Gastrocnemius medialis (tissue), 4 donors: ENCODE measurements at regions of chr5 and their contacts with region 1.

Region 1: GRCh38 chr5:172194985-172195774 is 1.2 kb downstream of the EFCAB9 start:
- DNase-seq: no peak
- ATAC-seq: no peak
- H3K4me3 ChIP-seq: no peak overlapping the region
- H3K27ac ChIP-seq: no peak overlapping the region
- H3K4me1 ChIP-seq: no peaks in the 10 kb centered on the region
- H3K27me3 ChIP-seq: no peaks in the 10 kb centered on the region
- CTCF ChIP-seq: no peak
- POLR2A ChIP-seq: no peak

Region 2: DNA sequence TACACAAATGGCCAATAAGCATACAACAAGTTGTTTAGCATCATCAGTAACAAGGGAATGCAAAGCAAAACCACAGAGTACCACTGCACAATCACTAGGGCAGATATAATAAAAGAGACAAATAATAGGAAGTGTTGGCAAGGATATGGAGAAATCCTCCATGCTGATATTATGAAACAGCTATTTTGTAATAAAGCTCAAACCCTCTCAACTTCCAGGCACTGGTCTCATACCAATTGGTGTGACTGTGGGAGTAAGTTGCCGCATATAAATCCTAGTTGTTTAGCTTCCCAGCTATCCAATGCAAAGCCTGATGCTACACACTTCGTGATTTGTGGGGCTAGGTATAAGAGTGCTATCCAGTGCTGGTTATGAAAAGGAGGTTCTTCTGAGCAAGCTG is 320.9 kb before region 1 on chr5:
- in situ Hi-C with region 1: no loop called
- intact Hi-C with region 1: no loop called
- DNase-seq: no peak
- ATAC-seq: no peak
- H3K4me3 ChIP-seq: no peak overlapping the region
- H3K27ac ChIP-seq: no peak overlapping the region
- H3K4me1 ChIP-seq: no peaks in the 10 kb centered on the region
- H3K27me3 ChIP-seq: no peaks in the 10 kb centered on the region
- CTCF ChIP-seq: no peak
- POLR2A ChIP-seq: no peak

Region 3: DNA sequence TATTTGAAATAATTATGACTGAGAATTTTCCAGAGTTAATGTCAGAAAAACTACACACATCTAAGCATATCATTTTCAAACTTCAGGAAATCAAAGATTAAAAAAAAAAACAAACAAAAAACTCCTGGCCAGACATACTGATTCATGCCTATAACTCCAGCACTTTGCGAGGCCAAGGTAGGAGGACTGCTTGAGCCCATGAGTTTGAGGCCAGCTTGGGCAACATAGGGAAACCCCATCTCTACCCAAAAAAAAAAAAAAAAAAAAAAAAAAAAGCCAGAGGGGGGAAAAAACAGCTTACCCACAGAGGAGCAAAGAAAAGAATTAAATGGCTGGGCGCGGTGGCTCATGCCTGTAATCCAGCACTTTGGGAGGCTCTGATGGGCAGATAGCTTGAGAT is 21.2 kb after region 1 on chr5:
- in situ Hi-C with region 1: no loop called
- intact Hi-C with region 1: no loop called
- DNase-seq: no peak
- ATAC-seq: no peak
- H3K4me3 ChIP-seq: no peak overlapping the region
- H3K27ac ChIP-seq: no peak overlapping the region
- H3K4me1 ChIP-seq: no peaks in the 10 kb centered on the region
- H3K27me3 ChIP-seq: no peaks in the 10 kb centered on the region
- CTCF ChIP-seq: no peak
- POLR2A ChIP-seq: no peak

Region 4: GRCh38 chr5:172293054-172293744 is 98.0 kb after region 1 on chr5:
- in situ Hi-C with region 1: loop called in 3 of 4 experiments (anchors 5 to 25 kb)
- intact Hi-C with region 1: no loop called
- DNase-seq: peak; percentile 53 to 71
- ATAC-seq: peak; percentile 97 to 99
- H3K4me3 ChIP-seq: no peak overlapping the region
- H3K27ac ChIP-seq: no peak overlapping the region
- H3K4me1 ChIP-seq: peaks cover 4 to 7% of the 10 kb centered on the region in 2 donors
- H3K27me3 ChIP-seq: no peaks in the 10 kb centered on the region
- CTCF ChIP-seq: peak; percentile 59 to 87 (median 68)
- POLR2A ChIP-seq: no peak